Dendritic cell treated with granulocyte-macrophage colony-stimulating factor and Interleukin-4, amounts not matched to agents 40 ng/mL and 50 ng/mL, for 4 days (primary cell): ENCODE measurements at regions of chr5 and their contacts with region 1.

Region 1: GRCh38 chr5:135437796-135438560 is 9.2 kb downstream of the DCANP1 start:
- H3K4me3 Mint-ChIP-seq: peak overlapping the region; percentile 36
- H3K27ac Mint-ChIP-seq: peak overlapping the region; percentile 91
- H3K4me1 Mint-ChIP-seq: peaks cover 93% of the 10 kb centered on the region
- H3K27me3 Mint-ChIP-seq: no peaks in the 10 kb centered on the region

Region 2: DNA sequence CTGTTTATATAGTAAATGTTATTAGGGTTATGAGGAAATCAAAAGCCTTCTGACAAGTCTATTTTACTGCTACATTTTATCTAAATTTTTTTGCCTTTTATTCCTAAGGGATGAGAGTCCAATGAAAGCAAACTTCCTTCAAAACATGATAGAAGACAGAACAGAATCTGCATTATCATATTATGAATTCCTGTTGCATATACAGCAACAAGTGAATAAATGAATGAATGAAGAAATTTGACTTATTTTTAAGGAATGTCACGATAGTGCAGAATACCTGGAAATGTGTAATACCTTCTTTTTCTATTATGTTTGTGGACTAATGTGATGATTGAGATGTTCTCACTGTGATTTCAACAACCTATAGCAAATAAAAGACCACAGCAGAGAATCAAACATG is 713.1 kb before region 1 on chr5:
- intact Hi-C with region 1: no loop called
- H3K4me3 Mint-ChIP-seq: no peak overlapping the region
- H3K27ac Mint-ChIP-seq: no peak overlapping the region
- H3K4me1 Mint-ChIP-seq: no peaks in the 10 kb centered on the region
- H3K27me3 Mint-ChIP-seq: no peaks in the 10 kb centered on the region

Region 3: DNA sequence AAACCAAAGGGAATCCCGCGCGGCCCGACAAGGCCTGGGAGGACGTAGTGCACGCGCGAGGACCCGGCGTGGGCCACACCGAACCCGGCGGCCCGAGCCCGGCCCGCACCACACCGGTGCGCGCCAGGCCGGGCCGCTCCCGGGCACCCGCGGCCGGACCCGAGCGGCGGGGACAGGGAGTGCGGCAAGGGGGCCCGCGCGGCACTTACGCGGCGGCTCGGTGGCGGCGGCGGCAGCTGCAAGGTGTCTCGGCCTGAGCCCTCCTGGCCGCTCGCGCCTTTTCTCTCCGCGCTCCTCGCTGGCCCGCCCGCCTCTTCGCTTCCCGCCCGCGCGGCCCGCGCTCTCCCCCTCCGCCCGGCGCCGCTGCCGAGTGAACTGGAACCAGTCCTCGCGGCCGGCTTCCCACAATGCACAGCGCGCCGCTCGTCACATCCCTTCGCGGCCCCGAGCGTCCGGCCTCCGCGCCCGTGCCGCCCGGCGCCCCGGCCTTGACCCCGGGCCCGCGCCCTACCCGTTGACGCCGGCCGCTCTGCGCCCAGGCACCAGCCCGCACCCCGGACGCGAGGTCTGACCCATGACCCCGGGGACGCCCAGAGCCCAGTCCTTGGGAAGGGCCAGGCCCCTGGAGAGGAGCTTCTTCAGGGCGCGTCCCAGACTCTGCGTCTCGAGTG is 39.0 kb before region 1 on chr5 and contains the start of gene MACROH2A1:
- intact Hi-C with region 1: loop called (anchors 5 kb)
- H3K4me3 Mint-ChIP-seq: peak within 1 kb of the TSS; percentile 93
- H3K27ac Mint-ChIP-seq: peak within 1 kb of the TSS; percentile 98
- H3K4me1 Mint-ChIP-seq: peaks cover 63% of the 10 kb centered on the region
- H3K27me3 Mint-ChIP-seq: no peaks in the 10 kb centered on the region

Region 4: GRCh38 chr5:135457424-135458071 is 19.6 kb after region 1 on chr5:
- intact Hi-C with region 1: loop called (anchors 1 kb)
- H3K4me3 Mint-ChIP-seq: no peak overlapping the region
- H3K27ac Mint-ChIP-seq: peak overlapping the region; percentile 92
- H3K4me1 Mint-ChIP-seq: peaks cover 74% of the 10 kb centered on the region
- H3K27me3 Mint-ChIP-seq: peaks cover 3% of the 10 kb centered on the region

Region 5: GRCh38 chr5:135578685-135579341 is 140.8 kb after region 1 on chr5 and contains the start of gene CXCL14:
- intact Hi-C with region 1: no loop called
- H3K4me3 Mint-ChIP-seq: peak within 1 kb of the TSS; percentile 44
- H3K27ac Mint-ChIP-seq: no peak within 1 kb of the TSS
- H3K4me1 Mint-ChIP-seq: peaks cover 12% of the 10 kb centered on the region
- H3K27me3 Mint-ChIP-seq: peaks cover 74% of the 10 kb centered on the region